ENCODE measurements at regions of chr13 and their contacts with region 1.

Region 1: GRCh38 chr13:43023289-43023951 is at the start of gene DNAJC15:
- DNase-seq: peak; percentile 76
- ATAC-seq: peak; percentile 96
- H3K4me3 ChIP-seq: peak within 1 kb of the TSS; percentile 78 to 100 (median 78)
- H3K27ac ChIP-seq: peak within 1 kb of the TSS; percentile 86
- H3K4me1 ChIP-seq: peaks cover 32% of the 10 kb centered on the region
- H3K27me3 ChIP-seq: no peaks in the 10 kb centered on the region; a peak in 2 of 5 replicates
- CTCF ChIP-seq: peak; percentile 44
- EP300 ChIP-seq: no peak
- POLR2A ChIP-seq: peak; percentile 83 to 84
- RAD21 ChIP-seq: no peak
- total RNA-seq, gene DNAJC15: 21.5 and 23.0 TPM in 2 replicates

Region 2: GRCh38 chr13:42977219-42977659 is 46.2 kb before region 1 on chr13:
- CTCF ChIA-PET with region 1: no interaction called
- POLR2A ChIA-PET with region 1: interaction called, 4 read pairs
- in situ Hi-C with region 1: no loop called
- intact Hi-C with region 1: loop called (anchors 5 kb)
- DNase-seq: no peak
- ATAC-seq: no peak
- H3K4me3 ChIP-seq: no peak overlapping the region
- H3K27ac ChIP-seq: no peak overlapping the region
- H3K4me1 ChIP-seq: no peaks in the 10 kb centered on the region
- H3K27me3 ChIP-seq: no peaks in the 10 kb centered on the region
- CTCF ChIP-seq: no peak
- EP300 ChIP-seq: no peak
- POLR2A ChIP-seq: no peak
- RAD21 ChIP-seq: no peak

Measured in HepG2 (cell line).